ENCODE measurements at regions of chr20 and their contacts with region 1.

Region 1: GRCh38 chr20:56091629-56092314 is 86.5 kb upstream of the CBLN4 start:
- DNase-seq: no peak
- ATAC-seq: no peak
- H3K4me3 ChIP-seq: no peak overlapping the region
- H3K4me3 Mint-ChIP-seq: no peak overlapping the region
- H3K27ac ChIP-seq: no peak overlapping the region
- H3K27ac Mint-ChIP-seq: no peak overlapping the region
- H3K4me1 ChIP-seq: no peaks in the 10 kb centered on the region
- H3K4me1 Mint-ChIP-seq: no peaks in the 10 kb centered on the region
- H3K27me3 ChIP-seq: no peaks in the 10 kb centered on the region
- H3K27me3 Mint-ChIP-seq: no peaks in the 10 kb centered on the region

Region 2: DNA sequence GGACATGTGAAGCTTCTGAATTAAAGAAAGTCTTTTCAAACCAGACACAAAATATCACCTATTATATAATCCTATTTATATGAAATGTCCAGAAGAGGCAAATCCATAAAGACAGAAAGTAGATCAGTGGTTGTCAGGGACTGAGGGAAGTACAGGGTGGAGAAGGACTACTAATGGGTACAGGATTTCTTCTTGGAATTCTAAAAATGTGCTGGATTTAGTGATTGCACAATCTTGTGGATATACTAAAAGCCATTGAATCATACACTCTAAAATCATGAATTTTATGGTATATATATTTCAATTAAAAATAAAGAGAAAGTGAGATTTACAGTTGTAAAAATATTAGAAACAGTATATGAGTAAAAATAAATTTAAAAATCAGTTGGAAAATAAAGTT is 138.0 kb after region 1 on chr20:
- CTCF ChIA-PET with region 1: no interaction called
- POLR2A ChIA-PET with region 1: no interaction called
- DNase-seq: no peak
- ATAC-seq: no peak
- H3K4me3 ChIP-seq: no peak overlapping the region
- H3K4me3 Mint-ChIP-seq: no peak overlapping the region
- H3K27ac ChIP-seq: no peak overlapping the region
- H3K27ac Mint-ChIP-seq: no peak overlapping the region
- H3K4me1 ChIP-seq: no peaks in the 10 kb centered on the region
- H3K4me1 Mint-ChIP-seq: no peaks in the 10 kb centered on the region
- H3K27me3 ChIP-seq: peaks cover 0 to 4% of the 10 kb centered on the region in 2 experiments
- H3K27me3 Mint-ChIP-seq: peaks cover 9 to 12% of the 10 kb centered on the region in 2 donors

Region 3: DNA sequence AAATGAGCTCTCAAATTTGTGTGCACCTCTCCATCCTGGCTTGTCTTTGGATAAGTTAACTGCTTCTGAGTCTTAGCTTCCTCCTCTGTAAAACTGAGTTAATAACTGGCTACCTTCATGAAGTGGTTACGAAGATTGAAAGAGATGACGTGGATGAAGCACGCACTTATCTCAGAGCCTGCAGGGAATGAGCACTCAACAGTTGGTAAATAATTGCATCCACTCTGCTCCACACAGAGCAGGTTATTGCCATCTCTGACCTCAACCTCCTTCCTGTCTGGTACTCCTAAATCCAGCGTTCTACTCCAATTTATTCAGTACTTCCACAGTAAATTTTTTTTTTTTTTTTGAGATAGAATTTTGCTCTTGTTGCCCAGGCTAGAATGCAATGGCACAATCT is 293.4 kb after region 1 on chr20:
- CTCF ChIA-PET with region 1: no interaction called
- POLR2A ChIA-PET with region 1: interaction called in 1 of 2 experiments, 10 read pairs
- DNase-seq: no peak
- ATAC-seq: no peak
- H3K4me3 ChIP-seq: no peak overlapping the region
- H3K4me3 Mint-ChIP-seq: no peak overlapping the region
- H3K27ac ChIP-seq: no peak overlapping the region
- H3K27ac Mint-ChIP-seq: no peak overlapping the region
- H3K4me1 ChIP-seq: no peaks in the 10 kb centered on the region
- H3K4me1 Mint-ChIP-seq: no peaks in the 10 kb centered on the region
- H3K27me3 ChIP-seq: no peaks in the 10 kb centered on the region
- H3K27me3 Mint-ChIP-seq: no peaks in the 10 kb centered on the region

Region 4: GRCh38 chr20:56941101-56941879 is 849.5 kb after region 1 on chr20:
- CTCF ChIA-PET with region 1: no interaction called
- POLR2A ChIA-PET with region 1: interaction called in 1 of 2 experiments, 12 read pairs
- DNase-seq: no peak
- ATAC-seq: no peak
- H3K4me3 ChIP-seq: no peak overlapping the region
- H3K4me3 Mint-ChIP-seq: no peak overlapping the region
- H3K27ac ChIP-seq: no peak overlapping the region
- H3K27ac Mint-ChIP-seq: no peak overlapping the region
- H3K4me1 ChIP-seq: no peaks in the 10 kb centered on the region
- H3K4me1 Mint-ChIP-seq: no peaks in the 10 kb centered on the region
- H3K27me3 ChIP-seq: peaks cover 0 to 13% of the 10 kb centered on the region in 2 experiments
- H3K27me3 Mint-ChIP-seq: peaks cover 0 to 22% of the 10 kb centered on the region in 2 donors